PC-9 (cell line): ENCODE measurements at regions of chr12 and their contacts with region 1.

Region 1: GRCh38 chr12:93378373-93379325 is 924 bp downstream of the NUDT4 start:
- DNase-seq: peak in 1 of 2 experiments; percentile 19
- H3K4me3 ChIP-seq: peak overlapping the region; percentile 86
- H3K27ac ChIP-seq: peak overlapping the region; percentile 42
- H3K4me1 ChIP-seq: peaks cover 28% of the 10 kb centered on the region
- H3K27me3 ChIP-seq: no peaks in the 10 kb centered on the region
- CTCF ChIP-seq: no peak

Region 2: DNA sequence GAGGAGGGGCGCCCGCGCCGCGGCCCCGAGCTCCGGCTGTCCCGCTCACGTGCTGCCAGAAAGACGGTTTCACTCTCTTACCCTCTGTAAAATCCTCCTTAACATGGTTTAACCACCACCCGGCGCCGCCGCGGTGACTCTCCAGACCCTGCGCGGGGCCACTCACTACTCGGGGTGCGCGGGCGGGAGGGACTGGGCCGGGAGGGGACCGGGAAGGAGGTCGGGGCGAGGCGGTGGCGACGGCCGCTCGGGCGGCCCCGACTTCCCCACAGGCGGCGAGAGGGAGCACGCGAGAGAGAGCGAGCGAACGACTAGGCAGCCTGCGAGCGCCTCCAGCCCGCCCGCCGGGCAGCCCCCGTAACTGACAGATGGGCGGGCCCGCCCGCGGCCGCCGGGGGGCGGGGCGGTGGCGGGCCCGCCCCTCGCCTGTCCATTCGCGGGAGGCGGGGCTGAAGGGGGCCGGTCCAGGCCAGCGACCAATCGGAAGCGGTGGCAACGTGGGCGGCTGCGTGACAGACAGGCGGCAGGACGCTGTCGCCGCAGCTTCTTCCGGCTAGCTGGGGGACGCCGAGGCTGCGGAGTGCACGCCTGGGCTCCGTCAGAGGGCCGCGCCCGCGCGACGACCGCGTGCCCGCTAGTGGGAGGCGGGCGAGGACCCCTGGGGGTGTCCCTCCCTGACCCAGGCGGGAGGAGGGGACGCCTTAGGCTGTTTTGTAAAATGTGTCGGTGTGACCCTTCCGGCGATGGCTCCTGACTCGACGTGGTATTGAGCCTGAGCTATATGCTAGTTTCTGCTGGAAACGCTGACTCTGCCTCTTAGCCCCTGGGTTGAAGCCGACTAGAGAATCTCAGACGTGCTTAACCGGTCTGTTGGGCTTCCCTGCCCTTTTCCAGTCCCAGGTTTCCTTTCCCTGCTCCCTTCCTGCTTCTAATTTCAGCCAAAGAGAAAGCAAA is 449.4 kb before region 1 on chr12 and contains the start of gene EEA1:
- CTCF ChIA-PET with region 1: no interaction called
- POLR2A ChIA-PET with region 1: interaction called, 4 read pairs
- intact Hi-C with region 1: loop called (anchors 1 kb)
- DNase-seq: peak; percentile 88 to 95
- H3K4me3 ChIP-seq: peak within 1 kb of the TSS; percentile 59
- H3K27ac ChIP-seq: peak within 1 kb of the TSS; percentile 91
- H3K4me1 ChIP-seq: peaks cover 40% of the 10 kb centered on the region
- H3K27me3 ChIP-seq: no peaks in the 10 kb centered on the region
- CTCF ChIP-seq: no peak
- total RNA-seq, gene EEA1: 10.1 and 15.7 TPM in 2 replicates

Region 3: GRCh38 chr12:93080994-93081797 is 297.5 kb before region 1 on chr12:
- CTCF ChIA-PET with region 1: no interaction called
- POLR2A ChIA-PET with region 1: interaction called, 4 read pairs
- intact Hi-C with region 1: loop called (anchors 5 kb)
- DNase-seq: peak; percentile 28 to 40
- H3K4me3 ChIP-seq: no peak overlapping the region
- H3K27ac ChIP-seq: peak overlapping the region; percentile 27; the same call in 1 of the 2 replicates
- H3K4me1 ChIP-seq: peaks cover 29% of the 10 kb centered on the region
- H3K27me3 ChIP-seq: no peaks in the 10 kb centered on the region
- CTCF ChIP-seq: no peak

Region 4: GRCh38 chr12:93198086-93198485 is 180.6 kb before region 1 on chr12:
- CTCF ChIA-PET with region 1: no interaction called
- POLR2A ChIA-PET with region 1: no interaction called
- intact Hi-C with region 1: loop called (anchors 10 kb)
- DNase-seq: peak; percentile 76 to 95
- H3K4me3 ChIP-seq: no peak overlapping the region
- H3K27ac ChIP-seq: peak overlapping the region; percentile 74
- H3K4me1 ChIP-seq: peaks cover 43% of the 10 kb centered on the region
- H3K27me3 ChIP-seq: no peaks in the 10 kb centered on the region
- CTCF ChIP-seq: no peak

Region 5: GRCh38 chr12:93315907-93316622 is 62.6 kb before region 1 on chr12:
- CTCF ChIA-PET with region 1: no interaction called
- POLR2A ChIA-PET with region 1: interaction called, 6 read pairs
- intact Hi-C with region 1: loop called (anchors 1 kb)
- DNase-seq: no peak
- H3K4me3 ChIP-seq: peak overlapping the region; percentile 59
- H3K27ac ChIP-seq: peak overlapping the region; percentile 87
- H3K4me1 ChIP-seq: peaks cover 55% of the 10 kb centered on the region
- H3K27me3 ChIP-seq: no peaks in the 10 kb centered on the region
- CTCF ChIP-seq: no peak